ENCODE measurements at regions of chr14 and their contacts with region 1.

Region 1: GRCh38 chr14:63276492-63277342 is 42.0 kb downstream of the GPHB5 start:
- DNase-seq: no peak
- ATAC-seq: peak; percentile 51

Region 2: DNA sequence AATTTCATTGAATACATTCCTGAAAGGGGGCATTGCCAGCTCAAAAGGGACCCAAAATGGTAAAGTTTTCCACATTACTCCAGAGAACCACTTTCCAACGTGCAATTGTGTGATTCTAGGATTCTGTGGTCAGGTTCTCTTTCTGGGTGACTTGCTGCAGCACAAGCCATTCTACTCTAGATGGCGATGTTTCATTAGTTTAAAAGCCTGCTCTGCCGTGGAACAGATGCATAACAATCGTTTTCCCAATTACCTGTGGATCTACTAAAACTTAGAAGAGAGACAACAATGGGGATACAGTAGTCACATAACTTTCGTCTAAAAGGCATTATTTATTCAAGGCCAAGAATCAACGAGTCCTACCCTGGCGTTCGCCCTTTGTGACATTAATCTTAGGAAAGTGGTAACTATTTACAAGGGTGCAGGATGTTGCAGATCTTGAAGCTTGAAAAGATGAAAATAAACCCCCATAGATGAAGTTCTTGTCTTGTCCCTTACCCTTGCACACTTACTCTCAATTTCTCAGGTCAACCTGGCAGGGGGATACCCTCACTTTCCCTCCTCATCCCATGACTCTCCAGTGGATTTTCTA is 1113.6 kb before region 1 on chr14:
- intact Hi-C with region 1: loop called (anchors 10 kb)
- DNase-seq: no peak
- ATAC-seq: peak; percentile 61

Region 3: DNA sequence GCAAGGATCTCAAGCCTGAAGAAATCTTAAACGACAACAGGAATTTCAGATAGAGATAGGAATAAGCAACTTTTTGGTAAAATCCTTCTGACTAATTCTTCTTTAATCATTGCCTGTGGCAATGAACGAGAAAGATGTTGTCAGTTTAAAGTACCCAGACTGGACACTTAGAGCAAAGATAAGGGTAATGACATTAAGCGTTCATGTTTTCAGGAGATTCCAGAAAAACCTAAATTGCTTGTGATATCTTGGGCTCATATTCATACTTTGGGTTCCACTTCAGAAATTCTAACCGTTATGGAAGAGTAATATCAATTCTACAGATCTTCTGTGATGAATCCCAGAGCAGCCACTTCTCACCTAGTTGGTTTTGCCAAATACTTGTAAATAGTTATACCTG is 146.2 kb before region 1 on chr14:
- intact Hi-C with region 1: no loop called
- DNase-seq: no peak
- ATAC-seq: no peak

Region 4: GRCh38 chr14:63174760-63175211 is 101.9 kb before region 1 on chr14:
- intact Hi-C with region 1: loop called (anchors 1 kb)
- DNase-seq: no peak
- ATAC-seq: peak; percentile 82

Measured in Right ventricle myocardium superior (tissue), 1 donor.